ENCODE measurements at regions of chr12 and their contacts with region 1.

Region 1: DNA sequence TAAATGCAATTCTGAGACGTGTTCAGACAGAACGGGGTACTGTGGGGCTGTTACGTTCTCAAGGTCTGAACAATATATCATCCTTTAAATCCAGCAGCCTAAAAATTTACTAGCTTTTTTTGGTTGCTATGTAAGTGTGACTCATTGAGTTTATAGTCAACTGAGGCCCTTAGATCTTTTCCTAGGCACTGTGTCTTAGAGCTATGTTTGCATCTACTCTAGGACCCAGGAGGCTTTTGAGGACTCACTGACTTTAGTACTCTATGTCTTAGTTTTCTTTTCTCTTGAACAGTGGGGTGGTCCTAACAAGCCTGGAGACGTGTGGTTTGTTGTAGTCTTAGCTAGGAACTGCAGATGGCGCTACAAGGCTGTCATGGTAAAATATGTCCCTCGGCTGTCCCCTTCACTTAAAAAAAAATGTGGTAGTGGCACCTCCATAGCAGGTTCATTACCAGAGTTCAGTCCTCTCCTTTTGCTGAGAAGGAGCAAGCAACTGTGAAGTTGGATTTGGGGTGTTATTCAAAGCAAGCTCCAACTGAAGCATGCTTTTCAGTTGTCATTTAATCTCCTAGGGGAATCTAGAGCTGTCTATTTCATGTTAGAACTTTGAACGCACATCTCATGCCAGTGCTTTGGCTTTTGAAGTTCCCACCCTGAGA is 8.7 kb upstream of the SPATS2 start:
- DNase-seq: no peak
- ATAC-seq: peak; percentile 99
- H3K4me3 ChIP-seq: no peak overlapping the region
- H3K27ac ChIP-seq: no peak overlapping the region
- H3K4me1 ChIP-seq: no peaks in the 10 kb centered on the region
- H3K27me3 ChIP-seq: no peaks in the 10 kb centered on the region
- CTCF ChIP-seq: peak; percentile 81 to 91 (median 81)
- EP300 ChIP-seq: no peak
- POLR2A ChIP-seq: no peak
- RAD21 ChIP-seq: peak; percentile 98

Region 2: DNA sequence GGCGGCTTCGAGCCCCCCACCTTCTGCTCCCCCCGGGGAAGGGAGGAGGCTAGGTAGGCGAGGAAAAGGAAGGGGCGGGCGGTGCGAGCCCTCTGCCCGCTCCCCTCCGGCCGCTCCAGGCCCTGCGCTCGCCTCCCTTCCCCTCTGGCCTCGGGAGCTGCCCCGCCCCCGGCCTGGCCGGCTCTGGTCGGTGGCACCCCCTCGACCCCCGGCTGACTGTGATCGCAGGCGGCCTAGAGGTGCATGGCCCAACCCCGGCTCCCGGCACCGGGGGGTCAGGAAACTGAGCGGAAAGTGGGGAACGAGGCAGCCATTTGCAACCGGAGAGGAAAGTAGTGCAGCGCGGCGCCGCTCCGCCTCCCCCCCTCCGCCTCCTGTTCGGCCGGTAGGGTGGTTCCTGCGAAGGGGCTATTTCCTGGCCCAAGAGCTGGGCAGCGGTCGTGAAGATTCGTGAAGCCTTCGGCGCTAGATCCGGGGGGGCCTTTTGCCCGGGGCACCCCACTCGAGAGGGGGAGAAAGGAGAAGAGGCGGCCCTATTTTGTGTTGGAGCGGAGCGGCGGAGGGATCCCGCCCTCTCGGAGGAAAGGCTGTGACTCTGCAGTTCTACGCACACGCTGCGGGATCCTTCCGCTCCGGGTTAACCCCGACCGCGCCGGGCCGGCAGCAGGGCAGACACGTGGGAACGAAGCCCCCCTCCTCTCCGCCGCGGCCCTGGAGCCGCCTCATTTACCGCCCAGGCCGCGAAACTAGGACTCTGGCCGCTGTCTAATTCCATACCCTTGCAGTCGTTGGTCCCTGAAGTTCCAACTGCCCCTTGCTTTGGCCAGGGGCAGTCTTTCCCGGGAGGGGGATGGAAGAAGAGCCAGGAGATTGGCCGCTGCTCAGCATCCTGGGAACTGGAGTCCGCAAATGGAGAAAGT is 298.1 kb before region 1 on chr12 and contains the start of gene KMT2D:
- CTCF ChIA-PET with region 1: no interaction called
- POLR2A ChIA-PET with region 1: no interaction called
- RAD21 ChIA-PET with region 1: no interaction called
- SMC1A ChIA-PET with region 1: no interaction called
- in situ Hi-C with region 1: no loop called
- intact Hi-C with region 1: no loop called
- DNase-seq: peak; percentile 59
- ATAC-seq: peak; percentile 78
- H3K4me3 ChIP-seq: peak within 1 kb of the TSS; percentile 99
- H3K27ac ChIP-seq: peak within 1 kb of the TSS; percentile 99
- H3K4me1 ChIP-seq: peaks cover 6% of the 10 kb centered on the region
- H3K27me3 ChIP-seq: no peaks in the 10 kb centered on the region
- CTCF ChIP-seq: peak in 1 of 3 experiments; percentile 28; a peak in 1 of 6 replicates
- EP300 ChIP-seq: peak in 1 of 2 experiments; percentile 66; a peak in 1 of 4 replicates
- POLR2A ChIP-seq: peak; percentile 80
- RAD21 ChIP-seq: no peak
- polyA plus RNA-seq, gene KMT2D: 0.51 to 1.2 TPM

Region 3: GRCh38 chr12:49288412-49288853 is 70.2 kb before region 1 on chr12:
- CTCF ChIA-PET with region 1: interaction called, 231 read pairs
- POLR2A ChIA-PET with region 1: no interaction called
- RAD21 ChIA-PET with region 1: interaction called, 37 read pairs
- SMC1A ChIA-PET with region 1: interaction called, 46 read pairs
- in situ Hi-C with region 1: no loop called
- intact Hi-C with region 1: loop called (anchors 1 kb)
- DNase-seq: peak; percentile 19
- ATAC-seq: peak; percentile 80
- H3K4me3 ChIP-seq: no peak overlapping the region
- H3K27ac ChIP-seq: no peak overlapping the region
- H3K4me1 ChIP-seq: no peaks in the 10 kb centered on the region
- H3K27me3 ChIP-seq: peaks cover 0 to 2% of the 10 kb centered on the region in 2 experiments; a peak in 2 of 4 replicates
- CTCF ChIP-seq: peak; percentile 69 to 86 (median 84)
- EP300 ChIP-seq: no peak
- POLR2A ChIP-seq: no peak
- RAD21 ChIP-seq: peak; percentile 85

Region 4: DNA sequence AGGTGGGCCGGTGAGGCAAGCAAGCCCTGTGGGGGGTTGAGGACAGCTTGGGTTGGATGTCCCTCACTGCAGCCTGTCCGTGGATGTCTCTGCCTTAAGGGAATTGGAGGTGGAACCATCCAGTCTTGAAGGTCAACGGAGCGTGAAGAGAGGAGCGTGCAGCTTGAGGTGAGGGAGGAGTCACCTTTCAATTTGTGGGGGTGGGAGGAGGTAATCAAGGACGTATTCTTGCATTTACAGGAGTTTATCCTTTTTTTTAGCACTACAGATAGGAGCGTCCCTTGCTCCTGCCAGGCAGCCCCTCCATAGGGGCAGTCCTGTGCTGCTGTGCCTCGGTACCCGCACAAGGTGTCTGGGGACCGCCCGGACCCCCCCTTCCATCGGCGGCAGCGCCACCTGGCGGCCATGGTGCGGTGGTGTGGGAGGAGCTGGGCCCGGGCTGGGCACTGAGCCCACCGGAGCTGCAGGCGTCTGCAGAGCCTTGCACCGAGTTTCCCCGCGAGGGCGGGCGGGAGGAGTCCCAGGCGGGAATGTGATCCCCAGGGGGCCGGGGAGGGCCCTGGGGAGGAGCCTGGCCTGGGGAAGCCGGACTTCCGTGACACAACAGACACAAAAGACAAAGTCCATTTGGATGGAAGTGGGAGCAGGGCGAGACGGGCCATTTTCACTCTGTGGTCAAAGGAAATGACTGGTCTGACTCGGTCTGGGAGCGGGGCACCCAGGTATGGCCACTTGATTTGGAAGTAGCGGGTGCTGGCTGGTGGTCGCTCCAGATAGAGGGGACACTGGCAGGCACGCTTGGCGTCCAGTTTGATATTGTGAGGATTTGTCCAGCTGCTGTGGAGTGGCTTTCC is 11.0 kb before region 1 on chr12:
- CTCF ChIA-PET with region 1: interaction called, 82 read pairs
- POLR2A ChIA-PET with region 1: interaction called, 3 read pairs
- RAD21 ChIA-PET with region 1: interaction called, 22 read pairs
- SMC1A ChIA-PET with region 1: interaction called, 30 read pairs
- in situ Hi-C with region 1: no loop called
- intact Hi-C with region 1: no loop called
- DNase-seq: no peak
- ATAC-seq: peak; percentile 88
- H3K4me3 ChIP-seq: peak overlapping the region; percentile 49
- H3K27ac ChIP-seq: no peak overlapping the region
- H3K4me1 ChIP-seq: peaks cover 34% of the 10 kb centered on the region
- H3K27me3 ChIP-seq: peaks cover 13 to 22% of the 10 kb centered on the region in 2 experiments
- CTCF ChIP-seq: peak; percentile 85 to 96 (median 86)
- EP300 ChIP-seq: no peak
- POLR2A ChIP-seq: no peak
- RAD21 ChIP-seq: peak; percentile 47

Region 5: GRCh38 chr12:49440035-49440434 is 81.4 kb after region 1 on chr12:
- CTCF ChIA-PET with region 1: interaction called, 25 read pairs
- POLR2A ChIA-PET with region 1: interaction called, 3 read pairs
- RAD21 ChIA-PET with region 1: interaction called, 3 read pairs
- SMC1A ChIA-PET with region 1: interaction called, 13 read pairs
- in situ Hi-C with region 1: no loop called
- intact Hi-C with region 1: no loop called
- DNase-seq: no peak
- ATAC-seq: no peak
- H3K4me3 ChIP-seq: no peak overlapping the region
- H3K27ac ChIP-seq: no peak overlapping the region
- H3K4me1 ChIP-seq: no peaks in the 10 kb centered on the region
- H3K27me3 ChIP-seq: no peaks in the 10 kb centered on the region
- CTCF ChIP-seq: no peak
- EP300 ChIP-seq: no peak
- POLR2A ChIP-seq: no peak
- RAD21 ChIP-seq: no peak

Region 6: DNA sequence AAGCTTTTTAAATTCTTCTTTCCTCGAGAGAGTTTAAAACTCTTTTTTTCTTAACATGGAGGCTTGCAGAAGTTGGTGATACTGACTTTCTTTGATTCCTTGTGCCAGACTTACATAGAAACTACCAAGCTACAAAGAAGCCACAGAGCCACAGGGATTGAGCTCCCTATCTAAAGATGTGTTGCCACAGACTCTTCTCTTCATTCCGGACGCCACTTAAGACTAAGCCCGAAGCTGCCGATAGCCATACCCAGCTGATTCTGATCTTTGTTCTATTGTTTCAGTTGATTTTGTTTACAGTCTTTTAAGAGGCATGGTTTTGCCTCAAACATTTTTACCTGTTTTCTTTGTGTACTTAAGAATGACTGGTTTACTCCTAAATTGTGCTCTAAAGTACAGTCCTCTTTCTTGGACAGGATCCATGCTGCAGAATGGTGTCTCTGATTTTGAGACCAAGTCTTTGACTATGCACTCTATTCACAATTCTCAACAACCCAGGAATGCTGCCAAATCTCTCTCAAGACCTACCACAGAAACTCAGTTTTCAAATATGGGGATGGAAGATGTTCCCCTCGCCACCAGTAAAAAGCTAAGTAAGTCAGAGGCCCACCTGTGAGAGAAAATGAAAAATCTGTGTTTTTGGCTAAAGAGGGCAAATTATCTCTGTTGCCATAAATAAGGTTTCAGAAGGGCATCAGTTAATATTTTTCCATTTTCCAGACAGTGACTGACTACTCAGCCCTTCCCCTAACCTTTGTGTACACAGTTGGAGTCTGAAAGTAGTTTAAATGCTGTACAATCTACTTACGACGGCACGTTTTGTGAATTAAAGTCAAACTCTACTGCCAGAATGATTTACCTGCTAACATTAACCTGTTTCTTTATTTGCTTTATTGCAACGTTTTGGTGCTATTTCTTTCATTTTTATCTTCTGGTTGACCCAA is 138.1 kb after region 1 on chr12:
- CTCF ChIA-PET with region 1: interaction called, 26 read pairs
- POLR2A ChIA-PET with region 1: no interaction called
- RAD21 ChIA-PET with region 1: interaction called, 5 read pairs
- SMC1A ChIA-PET with region 1: interaction called, 740 read pairs
- in situ Hi-C with region 1: no loop called
- intact Hi-C with region 1: no loop called
- DNase-seq: no peak
- ATAC-seq: no peak
- H3K4me3 ChIP-seq: no peak overlapping the region
- H3K27ac ChIP-seq: no peak overlapping the region
- H3K4me1 ChIP-seq: peaks cover 7% of the 10 kb centered on the region; the same call in 1 of the 2 replicates
- H3K27me3 ChIP-seq: no peaks in the 10 kb centered on the region
- CTCF ChIP-seq: no peak
- EP300 ChIP-seq: no peak
- POLR2A ChIP-seq: no peak
- RAD21 ChIP-seq: no peak

Region 7: GRCh38 chr12:49543914-49544815 is 185.6 kb after region 1 on chr12:
- CTCF ChIA-PET with region 1: interaction called, 6 read pairs
- POLR2A ChIA-PET with region 1: no interaction called
- RAD21 ChIA-PET with region 1: interaction called, 10 read pairs
- SMC1A ChIA-PET with region 1: no interaction called
- in situ Hi-C with region 1: no loop called
- intact Hi-C with region 1: no loop called
- DNase-seq: no peak
- ATAC-seq: no peak; the same call in 2 of the 3 replicates
- H3K4me3 ChIP-seq: no peak overlapping the region
- H3K27ac ChIP-seq: no peak overlapping the region
- H3K4me1 ChIP-seq: peaks cover 5% of the 10 kb centered on the region
- H3K27me3 ChIP-seq: peaks cover 2 to 21% of the 10 kb centered on the region in 2 experiments
- CTCF ChIP-seq: no peak
- EP300 ChIP-seq: no peak
- POLR2A ChIP-seq: no peak
- RAD21 ChIP-seq: no peak

Region 8: GRCh38 chr12:49636979-49637755 is 278.6 kb after region 1 on chr12:
- CTCF ChIA-PET with region 1: interaction called, 18 read pairs
- POLR2A ChIA-PET with region 1: no interaction called
- RAD21 ChIA-PET with region 1: interaction called, 4 read pairs
- SMC1A ChIA-PET with region 1: interaction called, 3 read pairs
- in situ Hi-C with region 1: no loop called
- intact Hi-C with region 1: no loop called
- DNase-seq: no peak
- ATAC-seq: peak; percentile 93
- H3K4me3 ChIP-seq: no peak overlapping the region
- H3K27ac ChIP-seq: no peak overlapping the region
- H3K4me1 ChIP-seq: peaks cover 3% of the 10 kb centered on the region; the same call in 1 of the 2 replicates
- H3K27me3 ChIP-seq: no peaks in the 10 kb centered on the region
- CTCF ChIP-seq: peak; percentile 73 to 77 (median 74)
- EP300 ChIP-seq: no peak
- POLR2A ChIP-seq: no peak; the same call in 1 of the 2 replicates
- RAD21 ChIP-seq: peak; percentile 84